ENCODE measurements at regions of chr2 and their contacts with region 1.

Region 1: GRCh38 chr2:11129598-11130449 is 25.4 kb upstream of the SLC66A3 start:
- DNase-seq: no peak
- H3K4me3 ChIP-seq: no peak overlapping the region
- H3K27ac ChIP-seq: no peak overlapping the region
- H3K4me1 ChIP-seq: peaks cover 28% of the 10 kb centered on the region
- H3K27me3 ChIP-seq: peaks cover 0 to 1% of the 10 kb centered on the region in 2 experiments
- CTCF ChIP-seq: peak in 1 of 2 donors; percentile 20
- POLR2A ChIP-seq: no peak

Region 2: GRCh38 chr2:11163439-11164317 is 33.9 kb after region 1 on chr2:
- CTCF ChIA-PET with region 1: interaction called, 13 read pairs
- POLR2A ChIA-PET with region 1: no interaction called
- dilution Hi-C with region 1: no loop called
- intact Hi-C with region 1: no loop called
- DNase-seq: no peak
- H3K4me3 ChIP-seq: no peak overlapping the region
- H3K27ac ChIP-seq: no peak overlapping the region
- H3K4me1 ChIP-seq: no peaks in the 10 kb centered on the region
- H3K27me3 ChIP-seq: no peaks in the 10 kb centered on the region
- CTCF ChIP-seq: no peak
- POLR2A ChIP-seq: no peak

Region 3: GRCh38 chr2:11234309-11234708 is 104.5 kb after region 1 on chr2:
- CTCF ChIA-PET with region 1: interaction called, 32 read pairs
- POLR2A ChIA-PET with region 1: no interaction called
- dilution Hi-C with region 1: no loop called
- intact Hi-C with region 1: loop called (anchors 1 kb)
- DNase-seq: peak; percentile 46
- H3K4me3 ChIP-seq: no peak overlapping the region
- H3K27ac ChIP-seq: no peak overlapping the region
- H3K4me1 ChIP-seq: no peaks in the 10 kb centered on the region
- H3K27me3 ChIP-seq: no peaks in the 10 kb centered on the region
- CTCF ChIP-seq: peak; percentile 17 to 21
- POLR2A ChIP-seq: no peak

Region 4: DNA sequence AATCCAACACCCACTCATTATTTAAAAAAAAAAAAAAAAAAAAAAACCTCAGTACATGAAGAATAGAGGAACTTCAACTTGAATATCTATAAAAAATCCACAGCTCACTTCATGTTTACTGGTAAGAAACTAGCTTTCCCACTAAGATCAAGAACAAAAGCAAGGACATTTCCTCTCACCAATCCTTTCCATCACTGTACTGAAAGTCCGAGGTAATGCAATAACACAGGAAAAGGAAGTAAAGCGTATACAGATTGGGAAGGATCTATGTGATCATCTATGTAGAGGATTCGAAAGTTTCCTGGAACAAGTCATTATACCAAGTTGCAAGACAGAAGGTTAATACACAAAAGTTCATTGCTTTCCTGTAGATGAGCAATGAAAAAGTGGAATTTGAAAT is 151.4 kb after region 1 on chr2:
- CTCF ChIA-PET with region 1: no interaction called
- POLR2A ChIA-PET with region 1: no interaction called
- dilution Hi-C with region 1: no loop called
- intact Hi-C with region 1: no loop called
- DNase-seq: peak; percentile 71
- H3K4me3 ChIP-seq: peak overlapping the region in 1 of 3 experiments; percentile 40
- H3K27ac ChIP-seq: peak overlapping the region; percentile 5
- H3K4me1 ChIP-seq: peaks cover 12% of the 10 kb centered on the region
- H3K27me3 ChIP-seq: no peaks in the 10 kb centered on the region
- CTCF ChIP-seq: no peak
- POLR2A ChIP-seq: no peak

Region 5: GRCh38 chr2:11368059-11368572 is 238.3 kb after region 1 on chr2:
- CTCF ChIA-PET with region 1: interaction called, 12 read pairs
- POLR2A ChIA-PET with region 1: no interaction called
- dilution Hi-C with region 1: no loop called
- intact Hi-C with region 1: no loop called
- DNase-seq: peak; percentile 65
- H3K4me3 ChIP-seq: peak overlapping the region in 1 of 3 experiments; percentile 32
- H3K27ac ChIP-seq: peak overlapping the region; percentile 16
- H3K4me1 ChIP-seq: peaks cover 16% of the 10 kb centered on the region
- H3K27me3 ChIP-seq: no peaks in the 10 kb centered on the region
- CTCF ChIP-seq: no peak
- POLR2A ChIP-seq: no peak

Region 6: DNA sequence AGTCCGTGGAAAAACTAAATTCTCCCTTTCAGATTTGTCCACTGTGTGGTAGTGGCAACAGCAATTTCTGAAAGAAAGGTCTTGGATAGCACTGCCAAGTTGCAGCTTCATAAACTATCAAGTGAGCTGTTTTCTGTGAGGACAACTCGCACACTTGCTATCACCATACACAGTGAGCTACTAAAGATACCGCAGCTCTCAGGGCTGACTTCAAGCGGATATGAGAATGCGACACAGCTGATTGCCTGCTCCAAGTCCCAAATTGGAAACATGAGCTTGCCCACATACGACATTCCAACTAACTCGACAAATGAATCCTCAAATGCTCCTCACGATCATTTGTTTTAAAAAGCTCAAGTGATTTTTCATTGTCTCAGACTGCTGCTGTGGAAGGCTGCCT is 290.0 kb after region 1 on chr2:
- CTCF ChIA-PET with region 1: interaction called, 162 read pairs
- POLR2A ChIA-PET with region 1: no interaction called
- dilution Hi-C with region 1: no loop called
- intact Hi-C with region 1: no loop called
- DNase-seq: no peak
- H3K4me3 ChIP-seq: no peak overlapping the region
- H3K27ac ChIP-seq: no peak overlapping the region
- H3K4me1 ChIP-seq: no peaks in the 10 kb centered on the region
- H3K27me3 ChIP-seq: no peaks in the 10 kb centered on the region
- CTCF ChIP-seq: no peak
- POLR2A ChIP-seq: no peak

Region 7: DNA sequence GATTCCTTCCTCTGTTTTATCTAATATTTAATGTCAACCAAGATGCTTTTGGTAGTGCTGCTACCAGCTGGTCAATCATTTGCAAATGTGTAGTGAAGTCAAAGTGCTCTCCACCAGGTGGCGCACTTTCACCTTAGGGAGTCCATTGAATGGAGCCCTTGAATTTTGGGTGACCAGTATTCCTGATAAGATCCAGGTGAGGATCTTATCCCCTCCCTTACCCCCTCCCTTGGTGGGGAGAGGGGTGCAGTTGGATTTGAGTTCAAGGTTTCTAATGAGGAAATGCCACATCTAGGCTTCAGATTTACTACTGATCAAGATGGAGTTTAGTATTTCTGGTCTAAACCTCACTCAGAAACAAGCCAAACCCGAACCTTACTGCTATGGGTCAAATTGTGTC is 348.2 kb after region 1 on chr2:
- CTCF ChIA-PET with region 1: interaction called, 21 read pairs
- POLR2A ChIA-PET with region 1: no interaction called
- dilution Hi-C with region 1: no loop called
- intact Hi-C with region 1: no loop called
- DNase-seq: peak; percentile 69
- H3K4me3 ChIP-seq: no peak overlapping the region
- H3K27ac ChIP-seq: no peak overlapping the region
- H3K4me1 ChIP-seq: no peaks in the 10 kb centered on the region
- H3K27me3 ChIP-seq: peaks cover 25 to 41% of the 10 kb centered on the region in 2 experiments
- CTCF ChIP-seq: peak; percentile 68 to 73
- POLR2A ChIP-seq: no peak

Measured in endothelial cell of umbilical vein (primary cell).